Tibial artery (tissue), 4 donors: ENCODE measurements at regions of chr11 and their contacts with region 1.

Region 1: DNA sequence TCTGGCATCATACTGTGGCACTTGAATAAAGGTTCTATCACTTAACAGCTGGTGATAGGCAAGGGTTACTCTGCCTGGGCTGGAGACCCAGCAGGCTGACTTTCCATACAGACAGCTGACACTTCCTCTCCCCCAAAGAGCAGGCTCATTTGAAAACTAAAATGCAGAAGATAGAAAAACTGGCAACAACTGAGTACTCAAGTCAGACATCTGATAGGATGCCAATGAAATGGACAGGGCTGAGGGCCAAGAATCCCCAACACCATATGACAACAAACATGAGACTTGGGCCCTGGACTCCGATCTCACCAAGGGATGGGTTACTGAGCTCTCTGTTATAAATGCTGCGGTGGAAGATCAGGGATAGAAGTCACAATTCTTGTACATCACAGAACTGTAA is 237.2 kb downstream of the LRRC4C start:
- DNase-seq: no peak
- H3K4me3 ChIP-seq: no peak overlapping the region
- H3K27ac ChIP-seq: no peak overlapping the region
- H3K4me1 ChIP-seq: no peaks in the 10 kb centered on the region
- H3K27me3 ChIP-seq: no peaks in the 10 kb centered on the region
- CTCF ChIP-seq: no peak

Region 2: DNA sequence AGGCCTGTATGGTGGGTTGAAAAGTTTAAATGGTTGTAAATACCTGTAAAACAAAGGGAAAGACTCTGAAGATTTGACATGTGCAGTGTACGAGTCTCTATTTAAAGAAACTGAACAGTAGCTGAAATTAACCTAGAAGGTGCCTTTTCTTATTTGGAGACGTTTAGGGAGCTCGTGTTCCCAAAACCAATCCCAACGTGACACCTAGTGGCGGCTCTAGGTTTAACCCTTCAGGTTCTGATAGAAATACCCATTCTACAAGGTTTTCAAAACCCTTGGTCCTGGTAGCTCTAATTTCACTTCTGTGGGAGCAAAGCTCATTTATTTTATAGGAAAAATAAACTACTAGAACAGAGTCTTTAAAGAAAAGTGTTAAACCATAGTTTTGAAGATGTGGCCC is 21.1 kb before region 1 on chr11:
- intact Hi-C with region 1: loop called (anchors 2 kb)
- DNase-seq: no peak
- H3K4me3 ChIP-seq: no peak overlapping the region
- H3K27ac ChIP-seq: no peak overlapping the region
- H3K4me1 ChIP-seq: no peaks in the 10 kb centered on the region
- H3K27me3 ChIP-seq: no peaks in the 10 kb centered on the region
- CTCF ChIP-seq: no peak

Region 3: GRCh38 chr11:41273908-41274307 is 51.7 kb after region 1 on chr11:
- intact Hi-C with region 1: no loop called
- DNase-seq: no peak
- H3K4me3 ChIP-seq: no peak overlapping the region
- H3K27ac ChIP-seq: no peak overlapping the region
- H3K4me1 ChIP-seq: no peaks in the 10 kb centered on the region
- H3K27me3 ChIP-seq: no peaks in the 10 kb centered on the region
- CTCF ChIP-seq: no peak